HCT116 (cell line): ENCODE measurements at regions of chr9 and their contacts with region 1.

Region 1: GRCh38 chr9:76658535-76659231 is 105.6 kb upstream of the PCA3 start:
- DNase-seq: peak; percentile 26
- ATAC-seq: peak; percentile 96
- H3K4me3 ChIP-seq: no peak overlapping the region
- H3K27ac ChIP-seq: no peak overlapping the region
- H3K4me1 ChIP-seq: no peaks in the 10 kb centered on the region
- H3K27me3 ChIP-seq: peaks cover 18% of the 10 kb centered on the region; the same call in 1 of the 2 replicates
- CTCF ChIP-seq: peak; percentile 56 to 74 (median 69)
- POLR2A ChIP-seq: no peak
- RAD21 ChIP-seq: peak; percentile 81

Region 2: DNA sequence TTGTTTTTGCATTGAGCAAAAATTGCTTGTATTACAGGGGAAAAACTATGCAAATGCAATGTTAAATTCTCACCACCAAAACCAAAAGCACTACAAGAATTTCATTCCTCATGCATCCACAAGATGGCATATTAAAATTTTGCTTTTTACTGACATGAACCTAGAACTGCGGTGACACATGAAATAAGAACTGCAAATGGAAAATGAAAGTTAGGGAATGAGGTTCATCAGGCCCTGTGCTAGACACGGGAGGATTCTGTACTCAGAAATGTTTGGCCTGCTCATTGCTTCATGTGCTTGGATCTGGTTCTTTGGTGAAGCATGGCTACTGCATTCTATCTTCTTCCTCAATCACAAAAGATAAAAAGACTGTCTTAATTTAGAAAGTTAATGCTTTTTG is 255.3 kb before region 1 on chr9:
- CTCF ChIA-PET with region 1: interaction called, 7 read pairs
- POLR2A ChIA-PET with region 1: no interaction called
- RAD21 ChIA-PET with region 1: no interaction called
- intact Hi-C with region 1: loop called (anchors 5 kb)
- DNase-seq: peak; percentile 42
- ATAC-seq: peak; percentile 77
- H3K4me3 ChIP-seq: peak overlapping the region; percentile 2 to 15; a peak in 1 of 4 replicates
- H3K27ac ChIP-seq: peak overlapping the region; percentile 9; the same call in 1 of the 2 replicates
- H3K4me1 ChIP-seq: peaks cover 8 to 22% of the 10 kb centered on the region in 2 experiments; a peak in 3 of 4 replicates
- H3K27me3 ChIP-seq: no peaks in the 10 kb centered on the region
- CTCF ChIP-seq: peak; percentile 49 to 67 (median 65); a peak in 5 of 6 replicates
- POLR2A ChIP-seq: no peak
- RAD21 ChIP-seq: peak; percentile 48; the same call in 1 of the 2 replicates

Region 3: DNA sequence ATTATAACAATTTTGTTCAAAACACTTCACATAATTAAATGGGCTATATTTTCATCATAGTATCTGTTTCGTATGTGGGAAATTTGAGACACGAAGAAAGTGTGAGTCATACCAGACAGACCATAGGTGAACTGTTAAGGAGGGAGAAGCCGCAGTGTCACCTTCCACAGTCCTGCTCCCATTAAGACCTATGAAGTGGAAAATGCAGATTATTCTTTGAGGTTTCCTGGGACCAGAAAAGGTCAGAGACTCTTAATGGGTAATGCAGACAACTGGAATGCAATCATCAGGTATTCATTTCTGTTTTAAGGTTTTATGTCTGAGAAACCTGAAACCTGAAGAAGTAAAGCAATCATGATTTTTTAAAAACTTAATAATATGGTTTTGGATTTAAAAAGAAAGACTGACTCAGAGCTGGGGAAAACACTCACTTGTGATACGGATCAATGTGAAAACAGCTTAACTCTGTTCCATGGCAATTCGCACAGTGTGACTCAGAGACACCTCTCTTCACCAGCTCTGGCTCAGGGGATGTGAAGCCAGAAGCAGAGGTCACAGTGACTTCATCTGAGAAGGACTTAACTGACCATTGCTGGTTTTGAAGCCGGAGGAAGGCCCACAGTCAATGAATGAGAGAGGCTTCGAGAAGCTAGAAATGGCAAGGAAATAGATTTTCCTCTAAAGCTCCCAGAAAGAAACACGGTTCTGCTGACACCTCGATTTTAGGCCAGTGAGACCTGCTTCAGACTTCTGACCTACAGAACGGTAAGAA is 216.9 kb before region 1 on chr9:
- CTCF ChIA-PET with region 1: interaction called, 43 read pairs
- POLR2A ChIA-PET with region 1: no interaction called
- RAD21 ChIA-PET with region 1: interaction called, 6 to 12 read pairs
- intact Hi-C with region 1: no loop called
- DNase-seq: no peak
- ATAC-seq: peak; percentile 50; the same call in 1 of the 2 replicates
- H3K4me3 ChIP-seq: no peak overlapping the region
- H3K27ac ChIP-seq: no peak overlapping the region
- H3K4me1 ChIP-seq: peaks cover 2 to 10% of the 10 kb centered on the region in 2 experiments; a peak in 3 of 4 replicates
- H3K27me3 ChIP-seq: no peaks in the 10 kb centered on the region
- CTCF ChIP-seq: no peak
- POLR2A ChIP-seq: no peak
- RAD21 ChIP-seq: no peak

Region 4: DNA sequence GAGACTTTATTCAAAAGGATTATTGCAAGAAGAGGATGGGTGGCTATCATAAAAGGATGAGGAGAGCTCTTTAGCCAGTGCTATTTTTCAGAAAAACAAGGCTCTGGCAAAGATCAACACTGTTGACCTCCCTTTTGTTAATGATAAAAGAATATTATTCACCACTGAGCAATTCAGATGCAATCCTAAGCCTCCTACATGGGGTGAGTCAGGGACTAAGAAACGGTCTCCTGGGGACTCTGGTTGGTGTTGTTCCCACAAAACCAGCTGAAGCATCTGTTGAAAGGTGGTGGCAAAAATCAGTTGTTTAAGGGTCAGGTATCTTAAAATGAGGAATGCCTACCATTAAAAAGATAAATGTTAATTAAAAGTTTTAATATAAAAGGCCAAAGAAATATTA is 207.4 kb before region 1 on chr9:
- CTCF ChIA-PET with region 1: interaction called, 43 read pairs
- POLR2A ChIA-PET with region 1: no interaction called
- RAD21 ChIA-PET with region 1: interaction called, 6 to 12 read pairs
- intact Hi-C with region 1: loop called (anchors 1 kb)
- DNase-seq: no peak
- ATAC-seq: no peak
- H3K4me3 ChIP-seq: no peak overlapping the region
- H3K27ac ChIP-seq: no peak overlapping the region
- H3K4me1 ChIP-seq: peaks cover 1 to 10% of the 10 kb centered on the region in 2 experiments; a peak in 3 of 4 replicates
- H3K27me3 ChIP-seq: no peaks in the 10 kb centered on the region
- CTCF ChIP-seq: no peak
- POLR2A ChIP-seq: no peak
- RAD21 ChIP-seq: no peak